HEK293 (cell line): ENCODE measurements at regions of chr14 and their contacts with region 1.

Region 1: DNA sequence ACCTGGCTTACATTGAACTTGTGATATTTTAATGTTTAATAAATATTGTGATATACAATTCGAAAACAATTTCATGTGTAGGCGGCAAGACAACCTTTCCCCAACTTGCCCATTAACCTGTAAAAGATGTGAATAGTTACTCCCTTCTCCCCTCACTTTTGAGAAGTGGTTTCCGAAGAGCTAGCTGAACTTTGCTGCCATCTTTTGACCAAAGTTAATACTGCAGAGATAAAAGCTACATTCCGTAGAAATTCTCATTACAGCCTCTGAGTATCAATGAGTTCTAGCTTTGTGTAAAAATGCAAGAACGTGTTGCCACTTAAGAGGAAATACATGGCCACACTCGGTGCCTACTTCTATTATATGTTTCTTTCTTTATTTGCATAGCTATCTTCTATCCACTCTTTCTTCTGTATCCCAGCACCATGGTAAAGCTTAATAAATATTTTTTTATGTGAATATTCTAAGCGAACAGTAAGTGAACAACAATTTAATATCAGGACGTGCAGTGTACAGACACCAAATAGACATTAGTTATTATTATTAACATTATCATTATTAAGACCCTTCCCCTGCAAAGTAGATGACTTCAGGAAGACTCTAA is 105.1 kb upstream of the TMEM260 start:
- H3K4me3 ChIP-seq: no peak overlapping the region
- H3K27ac ChIP-seq: no peak overlapping the region
- H3K4me1 ChIP-seq: no peaks in the 10 kb centered on the region
- CTCF ChIP-seq: peak; percentile 38; the same call in 1 of the 2 replicates

Region 2: GRCh38 chr14:55707365-55707804 is 767.1 kb before region 1 on chr14:
- CTCF ChIA-PET with region 1: interaction called, 12 read pairs
- POLR2A ChIA-PET with region 1: no interaction called
- H3K4me3 ChIP-seq: no peak overlapping the region
- H3K27ac ChIP-seq: no peak overlapping the region
- H3K4me1 ChIP-seq: no peaks in the 10 kb centered on the region
- CTCF ChIP-seq: no peak

Region 3: DNA sequence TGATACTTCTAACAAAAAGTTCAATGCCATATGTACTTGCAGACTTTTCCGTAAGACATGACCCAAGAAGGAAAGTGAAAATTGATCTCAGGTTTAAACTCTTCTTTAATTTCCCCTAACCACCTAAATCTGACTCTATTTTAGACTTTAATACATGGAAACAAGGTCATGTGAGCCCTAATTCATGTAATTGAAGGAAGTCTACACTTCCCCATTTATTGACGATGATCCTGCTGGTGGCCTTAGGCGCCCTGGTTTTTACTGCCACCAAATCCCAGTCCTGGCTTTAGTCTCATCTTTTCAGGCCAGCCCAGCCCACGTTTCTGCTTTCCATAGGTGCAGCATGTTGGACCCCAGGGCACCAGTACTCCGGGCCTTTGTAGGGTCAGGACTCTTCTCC is 198.4 kb before region 1 on chr14:
- CTCF ChIA-PET with region 1: no interaction called
- POLR2A ChIA-PET with region 1: interaction called, 12 read pairs
- H3K4me3 ChIP-seq: no peak overlapping the region
- H3K27ac ChIP-seq: no peak overlapping the region
- H3K4me1 ChIP-seq: no peaks in the 10 kb centered on the region
- CTCF ChIP-seq: no peak

Region 4: GRCh38 chr14:56449670-56450213 is 24.8 kb before region 1 on chr14:
- CTCF ChIA-PET with region 1: interaction called, 10 read pairs
- POLR2A ChIA-PET with region 1: no interaction called
- H3K4me3 ChIP-seq: no peak overlapping the region
- H3K27ac ChIP-seq: no peak overlapping the region
- H3K4me1 ChIP-seq: peaks cover 7% of the 10 kb centered on the region
- CTCF ChIP-seq: no peak

Region 5: DNA sequence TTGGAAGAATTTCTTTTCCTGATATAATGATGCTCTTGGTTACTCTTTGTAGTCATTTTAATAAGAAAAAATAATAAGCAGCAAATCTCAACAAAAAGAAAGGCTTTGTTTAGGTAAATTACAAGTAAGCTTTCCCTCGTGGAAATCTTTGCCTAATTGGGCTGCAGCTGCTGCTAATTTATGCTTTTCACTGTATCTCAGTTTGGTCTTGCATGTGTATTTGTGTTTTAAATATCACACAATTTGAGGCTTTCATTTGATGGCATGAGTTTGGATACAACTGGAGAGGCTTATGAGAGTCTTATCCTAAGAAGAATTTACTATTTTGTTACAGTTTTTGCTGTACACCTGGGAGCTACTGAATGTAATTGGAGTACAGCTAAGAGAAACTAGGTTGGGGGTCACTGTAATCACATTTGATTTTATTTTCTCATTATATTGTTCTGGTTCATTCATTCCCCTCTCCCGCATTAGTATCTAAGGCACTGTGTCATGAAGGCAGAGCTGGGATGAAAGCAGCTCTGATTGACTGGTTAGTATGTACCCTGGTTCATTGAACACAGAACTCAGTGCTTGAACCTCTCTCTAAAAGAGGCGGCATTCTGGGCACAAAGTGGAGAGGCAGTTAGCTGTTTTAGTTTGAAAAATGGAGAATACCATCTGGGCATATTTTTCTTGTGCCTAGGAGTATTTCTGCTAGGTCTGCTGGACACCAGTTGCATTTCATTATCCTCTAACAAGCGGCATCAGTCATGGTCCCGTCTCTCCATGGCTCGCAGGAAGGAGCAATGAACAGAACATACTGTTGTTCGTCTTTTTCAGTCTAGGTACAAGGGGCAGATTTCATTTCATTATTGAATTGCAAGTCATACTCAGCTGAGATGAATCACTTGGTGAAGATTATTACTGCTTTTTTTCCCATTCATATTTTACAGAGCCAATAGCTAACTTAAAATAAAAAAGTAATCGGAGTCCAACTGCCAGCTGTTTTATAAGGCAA is 12.9 kb before region 1 on chr14:
- CTCF ChIA-PET with region 1: interaction called, 11 read pairs
- POLR2A ChIA-PET with region 1: no interaction called
- H3K4me3 ChIP-seq: no peak overlapping the region
- H3K27ac ChIP-seq: no peak overlapping the region
- H3K4me1 ChIP-seq: no peaks in the 10 kb centered on the region
- CTCF ChIP-seq: no peak